Ovary (tissue), 10 donors: ENCODE measurements at regions of chr22 and their contacts with region 1.

Region 1: DNA sequence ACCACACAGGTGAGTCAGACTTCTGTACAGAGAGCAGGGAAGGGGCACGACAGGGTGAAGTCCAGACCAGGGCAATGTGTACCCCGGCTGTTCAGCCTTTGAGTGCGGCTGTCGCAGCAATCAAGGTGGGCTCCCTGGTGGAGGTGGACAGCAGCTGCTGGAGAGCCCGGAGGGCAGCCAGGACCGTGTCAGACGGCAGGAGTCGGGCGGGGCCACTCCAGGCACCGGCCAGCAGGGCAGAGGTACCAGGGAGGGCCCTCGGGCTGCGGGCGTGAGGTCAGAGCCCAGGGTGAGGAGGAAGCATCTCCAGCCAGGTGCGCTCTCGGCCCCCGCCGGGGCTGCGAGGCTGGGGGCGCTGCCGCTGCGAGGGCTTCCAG is 802 bp upstream of the PIM3 start:
- DNase-seq: peak in 4 of 5 donors; percentile 63 to 76 (median 74)
- H3K4me3 ChIP-seq: peak overlapping the region; percentile 82
- H3K27ac ChIP-seq: peak overlapping the region; percentile 97 to 99
- H3K4me1 ChIP-seq: peaks cover 7% of the 10 kb centered on the region
- H3K27me3 ChIP-seq: no peaks in the 10 kb centered on the region
- CTCF ChIP-seq: no peak
- EP300 ChIP-seq: no peak
- POLR2A ChIP-seq: no peak

Region 2: GRCh38 chr22:50012716-50013181 is 53.0 kb after region 1 on chr22 and contains the start of gene IL17REL:
- intact Hi-C with region 1: no loop called
- DNase-seq: peak in 3 of 5 donors; percentile 27 to 53 (median 27)
- H3K4me3 ChIP-seq: no peak within 1 kb of the TSS
- H3K27ac ChIP-seq: no peak within 1 kb of the TSS
- H3K4me1 ChIP-seq: peaks cover 2% of the 10 kb centered on the region
- H3K27me3 ChIP-seq: peaks cover 4% of the 10 kb centered on the region
- CTCF ChIP-seq: no peak
- EP300 ChIP-seq: no peak
- POLR2A ChIP-seq: no peak
- total RNA-seq, gene IL17REL: 0.10 to 0.18 (median 0.10) TPM in 3 of 7 donors, not detected in the others

Region 3: GRCh38 chr22:50190182-50190940 is 230.6 kb after region 1 on chr22:
- intact Hi-C with region 1: loop called in 1 of 4 experiments (anchors 10 kb)
- DNase-seq: peak; percentile 62 to 79 (median 68)
- H3K4me3 ChIP-seq: peak overlapping the region; percentile 30
- H3K27ac ChIP-seq: peak overlapping the region; percentile 4 to 60
- H3K4me1 ChIP-seq: peaks cover 9% of the 10 kb centered on the region
- H3K27me3 ChIP-seq: no peaks in the 10 kb centered on the region
- CTCF ChIP-seq: peak in 1 of 3 donors; percentile 17
- EP300 ChIP-seq: no peak
- POLR2A ChIP-seq: no peak